Activated T-helper 2 cell treated with anti-CD3 and anti-CD28 coated beads, Interferon-gamma antibody, Interleukin-2, Interleukin-4, amounts not matched to agents 10 μg/mL and 5 μg/mL and 100 μg/mL, durations not matched to agents 14 hours and 24 hours and 36 hours (primary cell): ENCODE measurements at regions of chr14 and their contacts with region 1.

Region 1: GRCh38 chr14:67359775-67360648 is at the starts of genes ATP6V1D and EIF2S1:
- DNase-seq: peak; percentile 100
- H3K4me3 Mint-ChIP-seq: peak within 1 kb of the TSS; percentile 97
- H3K27ac Mint-ChIP-seq: peak within 1 kb of the TSS; percentile 98
- H3K4me1 Mint-ChIP-seq: peaks cover 51% of the 10 kb centered on the region
- H3K27me3 Mint-ChIP-seq: no peaks in the 10 kb centered on the region
- total RNA-seq, gene ATP6V1D: 23.6 and 26.8 TPM in 2 replicates
- total RNA-seq, gene EIF2S1: 217 and 230 TPM in 2 replicates

Region 2: GRCh38 chr14:66507722-66508546 is 852.1 kb before region 1 on chr14 and contains the start of gene GPHN:
- intact Hi-C with region 1: loop called (anchors 1 kb)
- DNase-seq: peak; percentile 90
- H3K4me3 Mint-ChIP-seq: peak within 1 kb of the TSS; percentile 91
- H3K27ac Mint-ChIP-seq: peak within 1 kb of the TSS; percentile 91
- H3K4me1 Mint-ChIP-seq: peaks cover 33% of the 10 kb centered on the region
- H3K27me3 Mint-ChIP-seq: peaks cover 31% of the 10 kb centered on the region
- total RNA-seq, gene GPHN: 33.9 and 34.6 TPM in 2 replicates

Region 3: DNA sequence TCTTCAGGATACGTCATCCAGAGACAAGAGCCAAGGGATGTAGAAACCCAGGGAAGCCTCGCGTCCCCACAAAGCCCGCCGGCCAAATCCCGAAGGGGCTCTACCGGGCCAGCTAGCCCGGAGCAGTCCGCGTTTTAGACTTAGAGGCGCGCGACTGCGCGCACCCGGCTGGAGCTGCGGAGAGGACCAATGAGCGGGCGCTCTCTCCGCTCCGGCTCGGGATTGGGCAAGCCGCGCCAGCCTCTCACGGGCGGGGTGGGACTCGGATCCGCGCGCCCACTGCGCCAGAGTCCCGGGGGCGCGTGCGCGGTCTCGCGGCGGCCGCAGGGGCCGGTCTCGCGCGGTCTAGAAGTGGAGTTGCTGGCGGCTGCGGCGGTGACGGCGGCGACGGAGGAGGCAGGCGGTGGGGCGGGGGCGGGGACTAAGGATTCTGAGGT is 119.0 kb before region 1 on chr14:
- intact Hi-C with region 1: loop called (anchors 1 kb)
- DNase-seq: peak; percentile 92
- H3K4me3 Mint-ChIP-seq: peak overlapping the region; percentile 85
- H3K27ac Mint-ChIP-seq: peak overlapping the region; percentile 52
- H3K4me1 Mint-ChIP-seq: peaks cover 21% of the 10 kb centered on the region
- H3K27me3 Mint-ChIP-seq: peaks cover 31% of the 10 kb centered on the region

Region 4: DNA sequence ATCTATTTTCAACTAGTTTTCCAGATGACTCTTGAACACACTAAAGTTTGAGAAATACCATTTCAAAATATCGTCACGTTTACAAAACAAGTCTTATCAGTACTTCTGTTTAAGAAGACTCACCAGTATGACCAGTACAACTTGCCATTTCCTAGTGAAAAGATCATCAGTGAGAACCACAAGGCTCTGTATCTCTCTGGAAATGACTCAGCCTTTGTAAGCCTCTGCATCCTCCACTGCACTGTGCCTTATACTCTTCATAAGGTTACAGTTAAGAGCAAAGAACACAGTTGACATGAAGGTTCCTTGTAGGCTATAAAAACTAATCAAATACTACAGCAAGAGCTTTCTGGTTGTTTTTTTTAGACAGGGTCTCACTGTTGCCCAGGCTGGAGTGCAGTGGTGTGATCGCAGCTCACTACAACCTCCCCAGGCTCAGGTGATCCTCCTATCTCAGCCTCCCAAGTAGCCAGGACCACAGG is 320.1 kb after region 1 on chr14:
- intact Hi-C with region 1: loop called (anchors 5 kb)
- DNase-seq: peak; percentile 34
- H3K4me3 Mint-ChIP-seq: peak overlapping the region; percentile 7
- H3K27ac Mint-ChIP-seq: peak overlapping the region; percentile 83
- H3K4me1 Mint-ChIP-seq: peaks cover 45% of the 10 kb centered on the region
- H3K27me3 Mint-ChIP-seq: no peaks in the 10 kb centered on the region

Region 5: GRCh38 chr14:67816326-67817002 is 456.5 kb after region 1 on chr14 and contains the start of gene ZFYVE26:
- intact Hi-C with region 1: loop called (anchors 1 kb)
- DNase-seq: peak; percentile 89
- H3K4me3 Mint-ChIP-seq: peak within 1 kb of the TSS; percentile 87
- H3K27ac Mint-ChIP-seq: peak within 1 kb of the TSS; percentile 94
- H3K4me1 Mint-ChIP-seq: peaks cover 38% of the 10 kb centered on the region
- H3K27me3 Mint-ChIP-seq: no peaks in the 10 kb centered on the region
- total RNA-seq, gene ZFYVE26: 16.0 and 16.2 TPM in 2 replicates